Natural killer cell (primary cell): ENCODE measurements at regions of chr11 and their contacts with region 1.

Region 1: GRCh38 chr11:14249121-14249963 is 109.6 kb downstream of the RRAS2 start:
- DNase-seq: peak; percentile 51 to 84
- ATAC-seq: peak; percentile 58 to 73 (median 64)
- H3K4me3 ChIP-seq: no peak overlapping the region
- H3K4me3 Mint-ChIP-seq: peak overlapping the region; percentile 31
- H3K27ac ChIP-seq: no peak overlapping the region
- H3K27ac Mint-ChIP-seq: no peak overlapping the region
- H3K4me1 ChIP-seq: peaks cover 14% of the 10 kb centered on the region
- H3K4me1 Mint-ChIP-seq: peaks cover 10 to 13% of the 10 kb centered on the region in 2 donors
- H3K27me3 ChIP-seq: no peaks in the 10 kb centered on the region
- H3K27me3 Mint-ChIP-seq: peaks cover 18 to 31% of the 10 kb centered on the region in 2 donors
- CTCF ChIP-seq: peak; percentile 92

Region 2: DNA sequence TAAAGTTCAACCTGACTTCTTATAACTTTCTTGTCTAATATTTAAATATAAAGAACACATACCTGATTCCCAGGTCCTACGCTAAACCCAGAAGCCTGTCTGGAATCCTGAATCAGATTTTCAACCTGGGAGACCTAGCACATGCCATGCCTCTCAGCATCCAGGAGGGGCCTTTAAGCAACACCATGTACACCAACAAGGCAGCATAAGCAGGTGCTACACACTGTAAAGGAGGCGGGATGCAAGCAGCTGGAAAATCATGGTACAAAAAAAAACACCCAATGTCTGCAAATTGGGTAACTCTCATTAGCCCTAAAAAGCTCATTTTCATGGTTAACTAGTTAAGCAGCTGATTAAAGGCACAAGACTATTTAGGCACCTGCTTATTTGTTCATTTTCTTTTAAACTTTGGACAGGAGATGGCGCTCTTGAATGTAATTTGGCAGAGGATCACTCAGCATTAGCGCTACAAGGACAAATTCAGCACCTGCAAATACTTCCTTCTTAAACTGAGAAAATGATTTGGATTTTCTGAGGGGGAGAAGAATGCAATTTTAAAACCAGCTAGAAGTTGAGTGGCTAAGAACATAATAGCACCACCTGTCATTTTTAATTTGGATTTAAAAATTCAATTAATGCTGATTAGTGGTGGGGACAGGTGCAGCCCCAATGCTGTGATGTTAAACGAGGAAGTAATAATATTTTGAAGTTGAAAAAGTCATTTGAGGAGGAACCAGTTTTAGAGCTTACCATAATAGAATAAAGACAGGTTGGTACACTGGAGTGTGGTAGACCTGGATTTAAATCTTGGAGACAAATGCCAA is 476.9 kb before region 1 on chr11:
- intact Hi-C with region 1: loop called (anchors 1 kb)
- DNase-seq: peak in 1 of 2 donors; percentile 88
- ATAC-seq: peak; percentile 53 to 74 (median 63)
- H3K4me3 ChIP-seq: no peak overlapping the region
- H3K4me3 Mint-ChIP-seq: no peak overlapping the region
- H3K27ac ChIP-seq: no peak overlapping the region
- H3K27ac Mint-ChIP-seq: no peak overlapping the region
- H3K4me1 ChIP-seq: no peaks in the 10 kb centered on the region
- H3K4me1 Mint-ChIP-seq: no peaks in the 10 kb centered on the region
- H3K27me3 ChIP-seq: no peaks in the 10 kb centered on the region
- H3K27me3 Mint-ChIP-seq: peaks cover 13 to 25% of the 10 kb centered on the region in 2 donors
- CTCF ChIP-seq: peak; percentile 68

Region 3: GRCh38 chr11:13955971-13956421 is 293.3 kb before region 1 on chr11:
- intact Hi-C with region 1: loop called (anchors 1 kb)
- DNase-seq: peak; percentile 26 to 91
- ATAC-seq: peak; percentile 59 to 81 (median 66)
- H3K4me3 ChIP-seq: no peak overlapping the region
- H3K4me3 Mint-ChIP-seq: no peak overlapping the region
- H3K27ac ChIP-seq: no peak overlapping the region
- H3K27ac Mint-ChIP-seq: no peak overlapping the region
- H3K4me1 ChIP-seq: no peaks in the 10 kb centered on the region
- H3K4me1 Mint-ChIP-seq: no peaks in the 10 kb centered on the region
- H3K27me3 ChIP-seq: peaks cover 10% of the 10 kb centered on the region
- H3K27me3 Mint-ChIP-seq: peaks cover 18 to 28% of the 10 kb centered on the region in 2 donors
- CTCF ChIP-seq: peak; percentile 77

Region 4: GRCh38 chr11:14261066-14261465 is 11.7 kb after region 1 on chr11:
- intact Hi-C with region 1: no loop called
- DNase-seq: no peak
- ATAC-seq: no peak
- H3K4me3 ChIP-seq: no peak overlapping the region
- H3K4me3 Mint-ChIP-seq: no peak overlapping the region
- H3K27ac ChIP-seq: no peak overlapping the region
- H3K27ac Mint-ChIP-seq: no peak overlapping the region
- H3K4me1 ChIP-seq: no peaks in the 10 kb centered on the region
- H3K4me1 Mint-ChIP-seq: peaks cover 0 to 6% of the 10 kb centered on the region in 2 donors
- H3K27me3 ChIP-seq: no peaks in the 10 kb centered on the region
- H3K27me3 Mint-ChIP-seq: no peaks in the 10 kb centered on the region
- CTCF ChIP-seq: no peak

Region 5: DNA sequence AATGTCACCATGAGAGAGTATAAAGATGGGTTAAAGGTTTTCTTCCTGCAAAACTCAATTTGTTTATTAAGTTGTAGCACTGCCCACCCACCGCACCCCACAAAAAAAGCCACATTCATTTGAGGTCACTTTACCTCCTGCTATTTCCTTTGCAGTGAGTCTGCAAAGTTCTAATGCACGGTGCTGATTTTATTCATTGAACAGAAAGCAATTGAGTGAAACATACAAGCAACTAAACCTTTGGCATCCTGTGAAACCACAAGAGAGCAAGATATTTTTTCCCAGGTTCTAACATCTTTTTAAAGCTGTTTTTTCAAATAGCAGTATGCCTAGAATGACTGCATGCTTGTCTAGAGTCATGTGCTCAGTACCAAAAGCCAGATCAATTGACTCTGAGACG is 70.7 kb after region 1 on chr11:
- intact Hi-C with region 1: no loop called
- DNase-seq: peak in 1 of 2 donors; percentile 73
- ATAC-seq: peak; percentile 66 to 79 (median 70)
- H3K4me3 ChIP-seq: no peak overlapping the region
- H3K4me3 Mint-ChIP-seq: peak overlapping the region; percentile 81
- H3K27ac ChIP-seq: no peak overlapping the region
- H3K27ac Mint-ChIP-seq: peak overlapping the region; percentile 81 to 82
- H3K4me1 ChIP-seq: peaks cover 53% of the 10 kb centered on the region
- H3K4me1 Mint-ChIP-seq: peaks cover 84 to 90% of the 10 kb centered on the region in 2 donors
- H3K27me3 ChIP-seq: no peaks in the 10 kb centered on the region
- H3K27me3 Mint-ChIP-seq: no peaks in the 10 kb centered on the region
- CTCF ChIP-seq: no peak